T-cell (primary cell): ENCODE measurements at regions of chr5 and their contacts with region 1.

Region 1: GRCh38 chr5:112757468-112758208 is 20.0 kb downstream of the APC start:
- DNase-seq: peak in 4 of 35 experiments; percentile 6 to 75 (median 12)
- ATAC-seq: peak; percentile 58 to 76 (median 64)
- H3K4me3 ChIP-seq: no peak overlapping the region
- H3K4me3 Mint-ChIP-seq: no peak overlapping the region
- H3K27ac ChIP-seq: no peak overlapping the region
- H3K27ac Mint-ChIP-seq: peak overlapping the region; percentile 69 to 72
- H3K4me1 ChIP-seq: no peaks in the 10 kb centered on the region
- H3K4me1 Mint-ChIP-seq: peaks cover 8 to 15% (median 10%) of the 10 kb centered on the region in 3 donors
- H3K27me3 ChIP-seq: no peaks in the 10 kb centered on the region
- H3K27me3 Mint-ChIP-seq: no peaks in the 10 kb centered on the region

Region 2: DNA sequence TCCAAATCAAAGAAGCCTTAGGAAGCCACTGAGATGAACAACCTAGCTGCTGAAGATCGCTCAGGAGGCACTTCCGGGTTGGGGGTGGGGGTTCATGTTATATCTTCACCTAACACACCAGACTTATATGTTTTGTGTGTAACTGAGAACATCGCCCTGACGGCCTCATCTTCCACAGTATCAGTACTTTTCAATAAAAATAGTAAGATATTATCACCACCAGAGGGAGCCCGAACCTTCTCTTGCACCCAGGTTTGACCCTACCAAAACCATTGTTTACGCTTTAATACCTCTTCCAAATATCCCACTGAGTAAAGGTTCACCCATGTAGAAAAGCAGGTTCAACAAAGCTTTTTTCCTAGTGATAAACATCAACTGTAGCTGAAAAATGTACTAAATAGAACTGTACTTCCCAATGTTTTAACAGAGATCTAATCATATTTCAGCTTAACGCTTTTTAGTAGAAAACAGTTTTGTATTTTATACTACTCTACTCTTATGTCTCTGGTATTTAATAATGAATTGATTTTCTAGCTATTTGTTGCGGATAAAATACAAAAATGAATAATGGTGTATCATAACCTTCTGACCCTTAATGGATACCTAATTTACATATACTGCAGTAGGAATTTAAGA is 582.6 kb before region 1 on chr5:
- CTCF ChIA-PET with region 1: interaction called, 5 to 19 read pairs
- POLR2A ChIA-PET with region 1: no interaction called
- DNase-seq: peak in 19 of 35 experiments; percentile 3 to 66 (median 11)
- ATAC-seq: peak; percentile 37 to 62 (median 45)
- H3K4me3 ChIP-seq: no peak overlapping the region
- H3K4me3 Mint-ChIP-seq: no peak overlapping the region
- H3K27ac ChIP-seq: no peak overlapping the region
- H3K27ac Mint-ChIP-seq: no peak overlapping the region
- H3K4me1 ChIP-seq: peaks cover 3 to 4% of the 10 kb centered on the region in 2 experiments
- H3K4me1 Mint-ChIP-seq: peaks cover 0 to 6% (median 4%) of the 10 kb centered on the region in 3 donors
- H3K27me3 ChIP-seq: no peaks in the 10 kb centered on the region
- H3K27me3 Mint-ChIP-seq: peaks cover 6 to 18% of the 10 kb centered on the region in 2 donors

Region 3: GRCh38 chr5:112551419-112552032 is 206.1 kb before region 1 on chr5:
- CTCF ChIA-PET with region 1: interaction called, 40 to 64 read pairs
- POLR2A ChIA-PET with region 1: no interaction called
- DNase-seq: peak in 21 of 35 experiments; percentile 3 to 73 (median 18)
- ATAC-seq: peak in 3 of 4 experiments; percentile 42 to 49 (median 43)
- H3K4me3 ChIP-seq: no peak overlapping the region
- H3K4me3 Mint-ChIP-seq: no peak overlapping the region
- H3K27ac ChIP-seq: no peak overlapping the region
- H3K27ac Mint-ChIP-seq: no peak overlapping the region
- H3K4me1 ChIP-seq: no peaks in the 10 kb centered on the region
- H3K4me1 Mint-ChIP-seq: no peaks in the 10 kb centered on the region
- H3K27me3 ChIP-seq: no peaks in the 10 kb centered on the region
- H3K27me3 Mint-ChIP-seq: peaks cover 0 to 17% of the 10 kb centered on the region in 2 donors

Region 4: DNA sequence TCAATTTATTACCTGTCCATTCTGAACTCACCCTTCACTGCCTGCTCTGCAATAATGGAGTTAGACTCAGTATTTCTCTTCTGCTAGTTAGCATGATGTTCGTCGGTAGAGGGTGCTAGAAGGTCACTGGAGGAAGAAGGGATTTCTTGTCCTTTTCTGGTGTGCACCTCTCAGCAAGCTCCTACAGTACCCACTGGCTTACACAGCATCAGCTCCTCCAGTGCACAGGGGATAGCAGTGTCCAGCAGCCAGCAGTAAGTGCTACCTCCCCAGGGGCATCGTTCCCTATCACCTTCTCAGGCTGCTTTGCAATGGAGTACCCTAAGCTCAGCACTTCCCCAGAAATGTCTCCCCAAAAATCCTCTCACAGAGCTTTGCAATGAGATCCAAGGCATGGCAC is 65.9 kb before region 1 on chr5:
- CTCF ChIA-PET with region 1: interaction called, 6 to 14 read pairs
- POLR2A ChIA-PET with region 1: no interaction called
- DNase-seq: peak in 4 of 35 experiments; percentile 1 to 76 (median 16)
- ATAC-seq: no peak
- H3K4me3 ChIP-seq: no peak overlapping the region
- H3K4me3 Mint-ChIP-seq: no peak overlapping the region
- H3K27ac ChIP-seq: no peak overlapping the region
- H3K27ac Mint-ChIP-seq: no peak overlapping the region
- H3K4me1 ChIP-seq: no peaks in the 10 kb centered on the region
- H3K4me1 Mint-ChIP-seq: no peaks in the 10 kb centered on the region
- H3K27me3 ChIP-seq: peaks cover 0 to 20% of the 10 kb centered on the region in 2 experiments
- H3K27me3 Mint-ChIP-seq: peaks cover 39 to 43% of the 10 kb centered on the region in 2 donors